Activated naive CD8-positive, alpha-beta T cell treated with anti-CD3 and anti-CD28 coated beads, Interleukin-2, amount 10 ng/mL, durations not matched to agents 7 days and 5 days (primary cell): ENCODE measurements at regions of chr1 and their contacts with region 1.

Region 1: DNA sequence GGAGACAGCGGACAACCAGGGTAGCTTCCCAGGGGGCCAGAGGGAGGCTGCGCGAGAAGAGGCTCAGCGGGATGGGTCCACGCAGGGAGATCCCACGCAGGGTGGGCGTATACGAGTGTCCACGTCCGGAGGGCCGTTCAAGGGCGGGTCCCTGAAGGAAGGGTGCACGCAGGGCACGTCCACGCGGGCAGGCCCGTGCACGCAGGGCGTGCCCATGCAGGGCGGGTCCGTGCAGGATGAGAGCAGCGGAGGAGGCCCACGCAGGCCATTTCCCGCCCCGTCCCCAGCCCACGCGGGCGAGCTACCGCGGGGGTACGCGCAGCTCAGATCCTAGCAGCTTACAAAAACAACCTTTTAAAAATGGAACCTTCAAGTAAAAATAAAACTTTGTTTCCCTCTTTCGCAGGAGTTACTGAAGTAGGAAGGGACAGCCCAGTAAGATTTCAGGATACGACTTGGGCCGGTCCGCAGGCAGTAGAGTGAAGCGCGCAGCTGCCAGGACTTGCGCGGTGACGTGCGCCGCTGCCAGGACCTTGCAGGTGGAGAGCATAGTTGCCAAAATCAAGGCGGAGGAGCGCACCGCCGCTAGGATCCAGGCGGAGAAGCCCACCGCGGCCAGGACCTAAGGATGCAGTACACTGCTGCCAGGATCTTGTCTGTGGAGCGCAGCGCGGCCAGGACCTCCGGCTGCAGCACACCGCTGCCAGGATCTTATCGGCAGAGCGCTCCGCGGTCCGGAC is 416 bp upstream of the RNF187 start:
- DNase-seq: peak; percentile 81
- ATAC-seq: peak; percentile 67
- H3K4me3 Mint-ChIP-seq: peak overlapping the region; percentile 98
- H3K27ac Mint-ChIP-seq: peak overlapping the region; percentile 100
- H3K4me1 Mint-ChIP-seq: peaks cover 42% of the 10 kb centered on the region
- H3K27me3 Mint-ChIP-seq: no peaks in the 10 kb centered on the region

Region 2: DNA sequence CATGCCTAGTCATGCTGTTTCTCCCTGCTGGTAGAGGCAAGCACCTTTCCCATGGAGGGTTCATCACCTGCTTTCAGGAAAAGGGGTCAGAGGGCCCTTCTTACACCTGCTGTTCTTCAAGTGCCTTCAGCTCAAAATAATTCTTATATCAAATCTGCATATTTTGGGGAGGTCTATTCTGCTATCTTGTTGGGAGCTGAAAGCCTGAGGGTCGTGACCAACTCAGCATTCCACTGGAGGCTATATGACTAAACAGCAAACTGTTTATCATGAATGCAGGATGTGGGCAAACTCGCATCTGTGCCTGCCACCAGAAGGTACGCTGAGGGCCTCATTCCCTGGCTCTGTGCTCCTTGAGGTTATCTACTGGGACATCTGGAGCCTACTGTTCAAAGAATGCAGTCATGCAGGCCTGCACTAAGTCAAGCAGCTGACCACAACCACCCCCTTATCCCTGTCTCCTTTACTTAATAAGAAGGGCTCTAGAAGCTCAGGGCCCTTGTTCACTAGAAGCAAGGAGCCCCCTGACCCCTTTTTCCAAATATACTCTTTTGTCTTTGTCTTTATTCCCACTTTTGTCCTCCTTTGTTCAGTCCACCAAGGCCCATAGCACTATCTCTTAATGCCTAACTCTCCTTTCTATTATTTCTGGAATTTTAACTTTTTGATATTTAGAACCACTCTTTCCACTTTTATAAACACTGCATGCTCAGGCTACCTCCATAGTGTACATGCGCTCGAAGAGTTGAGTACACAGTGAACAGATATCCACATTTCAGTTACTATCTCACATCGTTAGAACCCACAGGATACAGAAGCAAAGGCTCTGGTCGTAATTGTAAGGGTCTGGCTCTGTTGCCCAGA is 65.6 kb before region 1 on chr1:
- POLR2A ChIA-PET with region 1: no interaction called
- DNase-seq: no peak
- ATAC-seq: no peak
- H3K4me3 Mint-ChIP-seq: no peak overlapping the region
- H3K27ac Mint-ChIP-seq: no peak overlapping the region
- H3K4me1 Mint-ChIP-seq: peaks cover 9% of the 10 kb centered on the region
- H3K27me3 Mint-ChIP-seq: peaks cover 14% of the 10 kb centered on the region

Region 3: DNA sequence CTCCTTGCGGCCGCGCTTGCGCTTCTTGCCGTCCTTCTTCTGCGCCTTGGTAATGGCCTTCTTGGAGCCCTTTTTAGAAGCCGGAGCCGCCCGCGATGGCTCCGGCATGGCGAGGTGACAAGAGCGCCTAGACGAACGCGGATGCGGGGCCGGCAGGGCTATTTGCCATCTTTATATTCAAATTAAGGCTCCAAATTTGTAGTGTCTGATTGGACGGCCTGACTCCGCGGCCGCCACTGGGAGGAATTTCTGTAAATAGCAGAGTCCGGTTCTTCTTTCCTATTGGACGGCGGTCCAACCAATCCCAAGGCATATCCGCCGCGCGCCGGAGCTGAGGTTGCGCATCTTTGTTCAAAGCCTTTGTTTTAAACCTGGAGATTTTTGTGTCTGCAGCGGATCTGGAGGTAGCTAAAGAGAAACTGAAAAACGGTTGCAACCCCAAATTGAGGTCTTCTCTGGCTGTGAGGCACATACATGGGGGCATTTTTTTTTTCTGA is 22.2 kb before region 1 on chr1:
- POLR2A ChIA-PET with region 1: interaction called, 111 read pairs
- DNase-seq: peak; percentile 87
- ATAC-seq: peak; percentile 81
- H3K4me3 Mint-ChIP-seq: peak overlapping the region; percentile 82
- H3K27ac Mint-ChIP-seq: peak overlapping the region; percentile 88
- H3K4me1 Mint-ChIP-seq: peaks cover 58% of the 10 kb centered on the region
- H3K27me3 Mint-ChIP-seq: peaks cover 17% of the 10 kb centered on the region

Region 4: DNA sequence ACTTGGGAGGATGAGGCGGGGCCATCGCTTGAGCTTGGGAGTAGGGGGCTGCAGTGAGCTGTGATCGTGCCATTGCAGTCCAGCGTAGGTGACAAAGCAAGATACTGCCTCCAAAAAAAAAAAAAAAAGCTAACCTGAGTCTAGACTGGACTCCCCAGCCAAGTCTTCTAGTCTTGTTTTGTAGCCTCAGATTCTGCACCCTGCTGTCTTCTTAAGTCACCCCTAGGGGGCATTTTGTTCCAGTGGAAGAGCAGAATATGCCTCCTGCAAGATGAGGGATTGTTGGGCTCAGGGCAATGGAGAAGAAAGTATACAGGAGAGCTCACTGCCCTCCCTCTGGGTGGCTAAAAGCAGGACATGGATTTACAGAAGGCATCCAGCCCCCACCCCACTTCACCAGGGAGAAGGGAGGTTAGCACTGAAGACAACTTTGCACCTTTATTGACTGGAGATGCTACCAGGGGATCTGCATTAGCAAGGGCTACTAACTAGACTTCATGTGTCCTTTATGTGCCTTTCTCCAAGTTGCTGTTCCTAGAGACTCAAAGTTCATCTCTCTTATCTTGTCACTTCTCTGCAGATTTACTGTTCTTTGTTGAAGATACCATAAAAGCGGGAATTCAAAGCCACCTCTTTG is 14.9 kb before region 1 on chr1:
- POLR2A ChIA-PET with region 1: interaction called, 26 read pairs
- DNase-seq: no peak
- ATAC-seq: peak; percentile 84
- H3K4me3 Mint-ChIP-seq: peak overlapping the region; percentile 34
- H3K27ac Mint-ChIP-seq: peak overlapping the region; percentile 77
- H3K4me1 Mint-ChIP-seq: peaks cover 37% of the 10 kb centered on the region
- H3K27me3 Mint-ChIP-seq: peaks cover 30% of the 10 kb centered on the region

Region 5: GRCh38 chr1:228500901-228501871 is 14.4 kb after region 1 on chr1:
- POLR2A ChIA-PET with region 1: interaction called, 17 read pairs
- DNase-seq: peak; percentile 86
- ATAC-seq: peak; percentile 96
- H3K4me3 Mint-ChIP-seq: peak overlapping the region; percentile 76
- H3K27ac Mint-ChIP-seq: peak overlapping the region; percentile 68
- H3K4me1 Mint-ChIP-seq: peaks cover 32% of the 10 kb centered on the region
- H3K27me3 Mint-ChIP-seq: peaks cover 2% of the 10 kb centered on the region

Region 6: GRCh38 chr1:228513236-228513900 is 26.6 kb after region 1 on chr1:
- POLR2A ChIA-PET with region 1: no interaction called
- DNase-seq: no peak
- ATAC-seq: no peak
- H3K4me3 Mint-ChIP-seq: no peak overlapping the region
- H3K27ac Mint-ChIP-seq: no peak overlapping the region
- H3K4me1 Mint-ChIP-seq: peaks cover 31% of the 10 kb centered on the region
- H3K27me3 Mint-ChIP-seq: peaks cover 42% of the 10 kb centered on the region

Region 7: DNA sequence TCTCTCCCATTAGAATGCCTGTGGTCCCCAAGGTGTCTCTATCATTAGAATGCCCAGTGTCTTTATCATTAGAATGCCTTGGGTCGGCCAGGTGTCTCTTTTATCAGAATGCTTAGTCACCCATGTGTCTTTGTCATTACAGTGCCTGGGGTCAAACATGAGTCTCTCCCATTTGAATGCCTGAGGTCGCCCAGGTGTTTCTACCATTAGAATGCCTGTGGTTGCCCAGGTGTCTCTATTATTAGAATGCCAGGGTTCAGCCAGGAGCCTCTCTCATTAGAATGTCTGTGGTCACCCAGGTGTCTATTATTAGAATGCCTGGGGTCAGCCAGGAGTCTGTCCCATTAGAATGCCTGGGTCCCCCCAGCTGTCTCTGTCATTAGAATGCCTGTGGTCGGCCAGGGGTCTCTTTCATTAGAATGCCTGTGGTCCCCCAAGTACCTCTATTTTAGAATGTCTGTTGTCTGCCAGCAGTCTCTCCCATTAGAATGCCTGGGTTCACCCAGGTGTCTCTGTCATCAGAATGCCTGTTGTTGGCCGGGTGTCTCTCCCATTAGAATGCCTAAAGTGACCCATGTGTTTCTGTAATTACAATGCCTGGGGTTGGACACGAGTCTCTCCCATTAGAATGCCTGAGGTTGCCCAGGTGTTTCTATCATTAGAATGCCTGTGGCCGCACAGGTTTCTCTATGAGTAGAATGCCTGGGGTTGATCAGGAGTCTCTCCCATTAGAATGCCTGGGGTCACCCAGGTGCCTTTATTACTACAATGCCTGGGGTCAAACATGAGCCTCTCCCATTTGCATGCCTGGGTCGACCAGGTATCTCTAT is 57.5 kb after region 1 on chr1:
- POLR2A ChIA-PET with region 1: no interaction called
- DNase-seq: no peak
- ATAC-seq: no peak
- H3K4me3 Mint-ChIP-seq: no peak overlapping the region
- H3K27ac Mint-ChIP-seq: no peak overlapping the region
- H3K4me1 Mint-ChIP-seq: no peaks in the 10 kb centered on the region
- H3K27me3 Mint-ChIP-seq: no peaks in the 10 kb centered on the region